PC-3 (cell line): ENCODE measurements at regions of chr5 and their contacts with region 1.

Region 1: DNA sequence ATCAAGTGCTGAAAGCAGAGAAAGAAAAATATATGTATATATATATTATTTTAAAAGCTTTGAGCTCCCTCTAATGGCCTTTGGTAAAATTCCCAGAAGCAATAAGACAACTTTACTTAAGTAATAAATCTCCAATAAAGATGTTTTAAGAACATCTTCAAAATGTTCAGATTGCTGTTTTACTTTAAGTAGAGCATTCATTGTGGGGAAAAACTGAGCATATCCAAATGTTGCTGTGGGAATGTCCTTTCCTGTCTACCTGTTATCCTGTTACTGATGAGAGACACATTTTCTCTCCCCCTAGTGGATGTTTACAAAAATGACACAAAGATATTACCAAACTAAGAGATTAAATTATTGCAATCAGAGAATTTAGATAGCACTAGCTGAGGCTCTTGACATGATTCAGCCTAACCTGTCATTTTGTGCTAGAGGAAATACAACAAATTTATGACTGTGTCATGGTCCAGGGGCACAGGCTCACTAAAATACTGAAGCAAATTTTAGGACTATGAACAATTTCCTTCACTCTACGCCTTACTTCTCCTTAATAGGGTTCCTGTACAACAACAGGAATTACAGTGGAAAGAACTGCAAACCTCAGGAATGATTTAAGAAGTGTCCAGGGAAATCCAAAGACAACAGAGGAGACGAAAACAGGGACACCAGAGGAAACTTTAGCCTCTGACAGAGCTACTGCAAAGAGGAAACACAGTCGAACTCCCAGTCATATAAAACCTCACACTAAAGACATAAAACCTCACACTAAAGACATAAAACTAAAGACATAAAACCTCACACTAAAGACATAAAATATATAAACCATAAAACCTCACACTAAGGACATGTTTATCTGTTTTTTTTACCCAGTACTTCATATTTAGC is 24.3 kb upstream of the PRRC1 start:
- DNase-seq: peak; percentile 48
- ATAC-seq: peak; percentile 76
- H3K4me3 ChIP-seq: no peak overlapping the region
- H3K27ac ChIP-seq: no peak overlapping the region
- H3K4me1 ChIP-seq: no peaks in the 10 kb centered on the region
- H3K27me3 ChIP-seq: peaks cover 61% of the 10 kb centered on the region
- CTCF ChIP-seq: peak; percentile 98

Region 2: DNA sequence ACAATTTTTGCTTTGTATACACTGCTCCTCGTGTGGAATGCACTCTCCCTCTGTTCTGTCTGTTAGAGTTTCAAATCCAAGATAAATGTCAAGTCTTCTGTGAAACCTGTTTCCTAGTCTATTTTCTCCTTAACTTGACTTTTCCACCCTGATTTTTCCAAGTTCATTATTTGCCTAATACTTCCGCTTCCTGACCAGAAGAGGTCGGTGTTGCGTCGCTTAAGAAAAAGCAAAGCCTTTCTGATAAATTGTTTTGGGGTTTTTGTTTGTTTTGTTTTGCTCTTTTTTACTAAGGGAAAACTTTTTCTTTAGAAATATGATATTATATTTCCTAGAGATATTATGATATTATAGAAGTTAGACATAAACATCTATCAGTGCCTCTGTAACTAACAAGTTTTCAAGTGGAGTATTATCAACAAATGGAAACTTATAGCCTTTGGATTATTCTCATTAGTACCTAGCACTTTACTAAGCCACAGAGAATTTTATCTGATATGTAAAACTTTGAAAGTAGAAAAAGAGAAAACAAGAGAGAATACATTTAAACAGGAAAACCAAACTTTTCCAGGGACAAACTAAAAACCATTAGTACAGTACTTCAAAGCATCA is 836.6 kb before region 1 on chr5:
- CTCF ChIA-PET with region 1: no interaction called
- POLR2A ChIA-PET with region 1: no interaction called
- intact Hi-C with region 1: loop called (anchors 5 kb)
- DNase-seq: peak; percentile 48
- ATAC-seq: no peak
- H3K4me3 ChIP-seq: no peak overlapping the region
- H3K27ac ChIP-seq: no peak overlapping the region
- H3K4me1 ChIP-seq: no peaks in the 10 kb centered on the region
- H3K27me3 ChIP-seq: no peaks in the 10 kb centered on the region
- CTCF ChIP-seq: peak; percentile 82

Region 3: GRCh38 chr5:126837906-126838539 is 655.1 kb before region 1 on chr5:
- CTCF ChIA-PET with region 1: no interaction called
- POLR2A ChIA-PET with region 1: no interaction called
- intact Hi-C with region 1: loop called (anchors 2 kb)
- DNase-seq: no peak
- ATAC-seq: peak; percentile 15; the same call in 1 of the 2 replicates
- H3K4me3 ChIP-seq: no peak overlapping the region
- H3K27ac ChIP-seq: no peak overlapping the region
- H3K4me1 ChIP-seq: no peaks in the 10 kb centered on the region
- H3K27me3 ChIP-seq: no peaks in the 10 kb centered on the region
- CTCF ChIP-seq: peak; percentile 31

Region 4: GRCh38 chr5:127290019-127290945 is 202.8 kb before region 1 on chr5 and contains the start of gene MEGF10:
- CTCF ChIA-PET with region 1: interaction called, 3 read pairs
- POLR2A ChIA-PET with region 1: no interaction called
- intact Hi-C with region 1: loop called (anchors 1 kb)
- DNase-seq: peak; percentile 46
- ATAC-seq: peak; percentile 83
- H3K4me3 ChIP-seq: no peak within 1 kb of the TSS
- H3K27ac ChIP-seq: no peak within 1 kb of the TSS
- H3K4me1 ChIP-seq: no peaks in the 10 kb centered on the region
- H3K27me3 ChIP-seq: peaks cover 51% of the 10 kb centered on the region
- CTCF ChIP-seq: peak; percentile 81
- total RNA-seq, gene MEGF10: not detected in 2 replicates

Region 5: GRCh38 chr5:127441799-127442484 is 51.2 kb before region 1 on chr5:
- CTCF ChIA-PET with region 1: no interaction called
- POLR2A ChIA-PET with region 1: no interaction called
- intact Hi-C with region 1: no loop called
- DNase-seq: peak; percentile 42
- ATAC-seq: no peak
- H3K4me3 ChIP-seq: no peak overlapping the region
- H3K27ac ChIP-seq: no peak overlapping the region
- H3K4me1 ChIP-seq: no peaks in the 10 kb centered on the region
- H3K27me3 ChIP-seq: peaks cover 72% of the 10 kb centered on the region
- CTCF ChIP-seq: peak; percentile 58